Mammary epithelial cell (primary cell): ENCODE measurements at regions of chr15 and their contacts with region 1.

Region 1: GRCh38 chr15:90291679-90292356 is 26.3 kb downstream of the NGRN start:
- DNase-seq: peak; percentile 21
- H3K4me3 ChIP-seq: no peak overlapping the region
- H3K27ac ChIP-seq: no peak overlapping the region
- H3K4me1 ChIP-seq: no peaks in the 10 kb centered on the region
- H3K27me3 ChIP-seq: no peaks in the 10 kb centered on the region
- CTCF ChIP-seq: no peak

Region 2: DNA sequence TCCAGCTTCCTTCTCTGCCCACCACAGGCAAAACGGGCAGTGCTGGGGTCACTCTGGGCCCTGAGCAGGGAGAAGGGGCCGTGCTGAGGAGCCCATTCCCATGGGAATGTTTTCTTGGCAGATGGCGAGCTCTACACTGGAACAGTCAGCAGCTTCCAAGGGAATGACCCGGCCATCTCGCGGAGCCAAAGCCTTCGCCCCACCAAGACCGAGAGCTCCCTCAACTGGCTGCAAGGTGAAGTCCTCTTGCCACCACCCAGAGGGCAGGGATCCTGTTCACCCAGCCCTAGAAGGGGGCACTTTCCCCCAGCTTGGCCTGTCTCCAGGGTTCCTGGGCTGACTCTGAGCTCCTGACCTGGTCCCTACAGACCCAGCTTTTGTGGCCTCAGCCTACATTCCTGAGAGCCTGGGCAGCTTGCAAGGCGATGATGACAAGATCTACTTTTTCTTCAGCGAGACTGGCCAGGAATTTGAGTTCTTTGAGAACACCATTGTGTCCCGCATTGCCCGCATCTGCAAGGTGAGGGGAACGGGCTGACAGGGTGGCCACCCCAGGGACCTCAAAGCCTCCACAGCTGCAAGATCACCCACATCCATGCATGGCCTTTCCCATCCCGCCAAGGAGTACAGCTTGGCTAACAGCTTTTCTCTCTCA is 70.4 kb before region 1 on chr15:
- CTCF ChIA-PET with region 1: no interaction called
- dilution Hi-C with region 1: loop called (anchors 5 kb)
- in situ Hi-C with region 1: no loop called
- intact Hi-C with region 1: no loop called
- DNase-seq: no peak
- H3K4me3 ChIP-seq: no peak overlapping the region
- H3K27ac ChIP-seq: no peak overlapping the region
- H3K4me1 ChIP-seq: peaks cover 11% of the 10 kb centered on the region
- H3K27me3 ChIP-seq: no peaks in the 10 kb centered on the region
- CTCF ChIP-seq: peak; percentile 59 to 81

Region 3: GRCh38 chr15:90603893-90604292 is 312.1 kb after region 1 on chr15:
- CTCF ChIA-PET with region 1: interaction called, 3 read pairs
- dilution Hi-C with region 1: no loop called
- in situ Hi-C with region 1: no loop called
- intact Hi-C with region 1: loop called (anchors 2 kb)
- DNase-seq: no peak
- H3K4me3 ChIP-seq: no peak overlapping the region
- H3K27ac ChIP-seq: no peak overlapping the region
- H3K4me1 ChIP-seq: no peaks in the 10 kb centered on the region
- H3K27me3 ChIP-seq: no peaks in the 10 kb centered on the region
- CTCF ChIP-seq: peak; percentile 48 to 60

Region 4: DNA sequence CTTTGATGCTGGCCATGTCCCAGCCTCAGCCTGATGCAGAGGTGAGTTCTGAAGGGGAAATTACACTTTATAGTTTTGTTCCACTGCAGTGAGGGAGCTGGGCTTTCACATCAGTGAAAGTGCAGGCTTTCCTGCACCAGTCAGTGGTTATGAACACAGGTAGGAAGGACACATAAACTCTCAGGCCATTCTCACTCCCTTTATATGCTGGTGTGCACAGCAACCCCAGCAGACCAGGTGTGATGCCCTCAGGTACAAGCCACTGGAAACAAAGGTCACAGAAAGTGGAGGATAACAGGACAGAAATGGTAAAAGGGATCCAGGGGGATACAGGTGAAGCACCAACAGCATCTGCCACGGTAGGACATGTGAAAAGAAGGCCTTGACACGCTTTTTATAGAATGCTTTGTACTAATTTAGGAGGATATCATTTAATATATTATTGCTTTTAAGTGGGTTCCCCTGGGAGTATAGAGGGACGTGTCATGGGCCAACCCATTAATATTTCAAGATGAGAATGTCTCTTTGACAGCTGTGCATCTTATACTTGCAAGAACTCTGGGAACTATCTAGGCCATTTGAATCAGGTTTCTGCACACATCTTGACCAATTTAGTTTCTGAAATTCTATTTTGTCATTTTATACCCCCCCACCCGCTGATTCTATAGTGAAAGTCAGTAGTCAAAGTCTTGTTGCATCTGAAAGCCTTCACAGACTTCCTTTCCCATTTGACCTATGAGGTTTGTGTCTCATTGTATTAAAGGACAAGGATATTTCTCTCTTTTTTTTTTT is 400.4 kb after region 1 on chr15:
- CTCF ChIA-PET with region 1: no interaction called
- dilution Hi-C with region 1: no loop called
- in situ Hi-C with region 1: no loop called
- intact Hi-C with region 1: loop called (anchors 1 kb)
- DNase-seq: no peak
- H3K4me3 ChIP-seq: no peak overlapping the region
- H3K27ac ChIP-seq: no peak overlapping the region
- H3K4me1 ChIP-seq: no peaks in the 10 kb centered on the region
- H3K27me3 ChIP-seq: no peaks in the 10 kb centered on the region
- CTCF ChIP-seq: no peak

Region 5: GRCh38 chr15:90931737-90932659 is 640.2 kb after region 1 on chr15 and contains the start of gene HDDC3:
- CTCF ChIA-PET with region 1: no interaction called
- dilution Hi-C with region 1: no loop called
- in situ Hi-C with region 1: no loop called
- intact Hi-C with region 1: loop called (anchors 2 kb)
- DNase-seq: peak; percentile 85
- H3K4me3 ChIP-seq: peak within 1 kb of the TSS; percentile 63 to 74 (median 69)
- H3K27ac ChIP-seq: peak within 1 kb of the TSS; percentile 50
- H3K4me1 ChIP-seq: peaks cover 39% of the 10 kb centered on the region
- H3K27me3 ChIP-seq: no peaks in the 10 kb centered on the region
- CTCF ChIP-seq: peak; percentile 64 to 98
- total RNA-seq, gene HDDC3: 10.5 to 16.2 TPM